Activated CD4-positive, alpha-beta memory T cell treated with anti-CD3 and anti-CD28 coated beads for 36 hours (primary cell): ENCODE measurements at regions of chr4 and their contacts with region 1.

Region 1: GRCh38 chr4:48033825-48034413 is 17.3 kb downstream of the NIPAL1 start:
- DNase-seq: peak; percentile 69
- H3K4me3 Mint-ChIP-seq: no peak overlapping the region
- H3K27ac Mint-ChIP-seq: no peak overlapping the region
- H3K4me1 Mint-ChIP-seq: peaks cover 37% of the 10 kb centered on the region
- H3K27me3 Mint-ChIP-seq: peaks cover 6% of the 10 kb centered on the region

Region 2: DNA sequence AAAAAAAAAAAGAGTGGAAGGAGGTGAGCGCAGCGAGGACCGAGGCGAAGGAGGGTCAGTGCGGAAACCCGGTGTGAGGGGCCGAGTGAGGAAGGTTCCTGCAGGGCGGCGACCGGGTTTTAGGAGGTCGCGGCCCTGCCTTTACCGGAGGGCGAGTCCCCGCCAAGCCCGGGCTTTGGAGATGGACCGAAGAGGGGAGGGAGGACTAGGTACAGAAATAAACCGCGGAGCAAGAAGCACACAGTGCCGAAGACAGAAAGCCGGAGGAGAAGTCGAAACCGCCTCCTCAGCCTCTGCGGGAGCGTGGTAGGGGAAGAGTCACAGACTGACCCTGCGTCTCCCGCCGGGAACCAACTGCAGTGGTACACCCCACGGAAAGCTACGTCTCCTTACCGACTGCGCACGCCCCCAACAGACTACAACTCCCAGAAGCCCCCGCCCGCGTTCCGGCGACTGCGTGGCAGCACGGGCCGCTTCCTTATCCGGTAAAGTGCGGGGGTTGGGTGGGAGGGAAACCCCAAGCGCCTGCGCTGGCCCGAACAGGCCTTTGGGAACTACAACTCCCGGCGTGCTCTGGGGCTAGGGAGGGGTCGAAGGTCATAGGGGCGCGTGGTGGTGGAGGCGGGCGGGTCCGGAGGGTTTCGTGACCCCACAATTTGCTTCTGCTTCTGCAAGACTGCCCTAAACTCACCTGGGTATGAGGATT is 119.5 kb before region 1 on chr4 and contains the start of gene NFXL1:
- CTCF ChIA-PET with region 1: no interaction called
- POLR2A ChIA-PET with region 1: no interaction called
- intact Hi-C with region 1: loop called (anchors 5 kb)
- DNase-seq: peak; percentile 98
- H3K4me3 Mint-ChIP-seq: peak within 1 kb of the TSS; percentile 97
- H3K27ac Mint-ChIP-seq: peak within 1 kb of the TSS; percentile 93
- H3K4me1 Mint-ChIP-seq: peaks cover 30% of the 10 kb centered on the region
- H3K27me3 Mint-ChIP-seq: no peaks in the 10 kb centered on the region
- total RNA-seq, gene NFXL1: 10.9 to 12.0 TPM

Region 3: DNA sequence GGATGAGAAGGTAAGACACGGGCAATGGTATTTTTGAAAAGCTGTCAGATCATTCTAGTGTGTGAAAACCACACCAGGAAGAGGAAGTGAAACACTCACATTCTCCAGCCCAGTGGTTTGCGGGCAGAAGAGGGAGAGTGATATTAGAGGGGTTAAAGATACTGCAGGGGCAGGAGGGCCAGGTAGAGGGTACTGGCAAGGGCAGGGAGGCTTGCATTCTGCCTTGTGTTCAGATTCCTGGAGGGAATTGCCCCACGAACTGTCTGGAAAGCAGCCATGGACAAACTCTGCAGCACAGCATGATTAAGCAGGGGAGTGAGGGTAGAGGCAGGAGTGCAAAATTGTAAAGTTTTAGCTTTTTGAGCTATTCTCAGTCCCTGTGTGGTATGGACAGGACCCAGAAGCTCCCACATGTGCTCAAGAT is 13.5 kb after region 1 on chr4:
- CTCF ChIA-PET with region 1: interaction called, 87 read pairs
- POLR2A ChIA-PET with region 1: interaction called, 10 read pairs
- intact Hi-C with region 1: loop called (anchors 1 kb)
- DNase-seq: peak; percentile 91
- H3K4me3 Mint-ChIP-seq: no peak overlapping the region
- H3K27ac Mint-ChIP-seq: peak overlapping the region; percentile 15
- H3K4me1 Mint-ChIP-seq: peaks cover 52% of the 10 kb centered on the region
- H3K27me3 Mint-ChIP-seq: peaks cover 34% of the 10 kb centered on the region

Region 4: GRCh38 chr4:48093949-48094550 is 60.1 kb after region 1 on chr4:
- CTCF ChIA-PET with region 1: interaction called, 15 read pairs
- POLR2A ChIA-PET with region 1: no interaction called
- intact Hi-C with region 1: loop called (anchors 2 kb)
- DNase-seq: peak; percentile 75
- H3K4me3 Mint-ChIP-seq: no peak overlapping the region
- H3K27ac Mint-ChIP-seq: peak overlapping the region; percentile 65
- H3K4me1 Mint-ChIP-seq: peaks cover 16% of the 10 kb centered on the region
- H3K27me3 Mint-ChIP-seq: no peaks in the 10 kb centered on the region

Region 5: DNA sequence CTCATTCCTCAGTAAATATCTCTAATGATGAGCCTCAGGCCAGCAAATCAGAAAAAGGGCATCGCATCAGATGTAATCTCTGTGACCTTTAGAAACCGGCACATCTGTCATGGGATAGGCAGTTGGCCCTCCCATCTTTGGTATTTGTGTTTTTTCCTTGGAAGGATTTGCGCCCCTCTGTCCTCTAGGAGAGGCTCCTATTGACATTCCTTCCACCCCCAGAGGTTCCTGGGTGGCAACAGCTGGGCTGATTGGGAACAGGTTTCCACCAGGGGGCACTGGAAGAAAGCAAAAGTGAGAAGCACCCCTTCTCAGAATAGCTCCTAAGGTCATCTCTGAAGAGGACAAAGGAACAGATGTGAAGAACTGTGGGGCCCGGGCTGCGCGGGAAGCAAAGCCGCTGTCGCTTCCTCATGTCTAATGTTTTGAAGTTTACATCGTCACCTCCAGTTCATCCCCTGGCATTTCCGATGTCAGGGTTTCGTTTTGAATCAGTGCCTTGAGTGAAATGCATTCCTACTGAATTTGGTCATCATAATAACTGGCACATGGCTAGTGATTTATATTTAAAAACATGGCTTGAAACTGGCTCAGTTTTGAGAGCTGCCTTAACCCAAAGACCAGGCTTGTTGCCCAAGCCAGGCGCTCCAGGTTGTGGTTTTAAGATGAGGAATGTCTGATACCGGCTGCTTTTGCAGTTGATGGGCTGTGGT is 93.9 kb after region 1 on chr4:
- CTCF ChIA-PET with region 1: interaction called, 15 read pairs
- POLR2A ChIA-PET with region 1: interaction called, 5 read pairs
- intact Hi-C with region 1: loop called (anchors 1 kb)
- DNase-seq: peak; percentile 93
- H3K4me3 Mint-ChIP-seq: peak overlapping the region; percentile 63
- H3K27ac Mint-ChIP-seq: peak overlapping the region; percentile 95
- H3K4me1 Mint-ChIP-seq: peaks cover 89% of the 10 kb centered on the region
- H3K27me3 Mint-ChIP-seq: no peaks in the 10 kb centered on the region

Region 6: DNA sequence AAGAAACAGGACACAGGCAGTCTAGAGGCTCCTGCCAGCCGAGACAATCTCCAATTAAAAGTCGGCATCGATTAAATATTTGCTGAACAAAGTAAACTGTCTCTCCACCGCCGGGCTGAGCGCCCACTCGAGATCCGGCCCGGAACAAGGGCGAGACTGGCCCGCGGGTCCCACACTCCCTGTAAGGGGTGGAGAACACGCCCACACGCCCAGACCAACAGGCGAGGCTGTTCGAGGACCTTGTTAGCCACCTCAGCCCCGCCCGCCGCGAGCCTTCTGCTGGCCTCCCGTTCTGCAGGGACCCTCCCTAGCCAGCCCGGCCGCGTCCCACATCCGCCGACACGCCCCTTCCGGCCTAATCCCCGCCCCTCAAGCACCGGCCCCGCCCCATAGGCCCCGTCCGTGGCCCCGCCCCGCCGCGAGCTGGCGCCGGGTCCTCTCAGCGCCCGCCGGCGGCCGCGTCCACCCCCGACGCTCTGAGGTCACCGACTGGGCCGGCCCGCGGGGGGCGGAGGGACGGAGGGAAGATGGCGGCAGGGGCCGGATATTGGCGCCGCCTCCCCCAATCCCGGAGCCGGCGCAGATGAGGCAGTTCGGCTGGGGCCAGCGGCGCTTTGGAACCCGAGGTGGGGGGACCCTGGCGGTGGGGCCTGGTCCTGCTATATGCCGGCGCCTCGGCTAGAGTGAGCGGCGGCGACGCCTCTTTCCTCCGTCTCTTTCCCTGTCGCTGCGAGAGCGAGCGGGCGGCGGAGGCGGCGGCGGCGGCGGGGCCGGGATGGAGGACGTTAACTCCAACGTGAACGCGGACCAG is 307.3 kb after region 1 on chr4 and contains the start of gene SLAIN2:
- CTCF ChIA-PET with region 1: no interaction called
- POLR2A ChIA-PET with region 1: no interaction called
- intact Hi-C with region 1: loop called (anchors 1 kb)
- DNase-seq: peak; percentile 99
- H3K4me3 Mint-ChIP-seq: peak within 1 kb of the TSS; percentile 99
- H3K27ac Mint-ChIP-seq: peak within 1 kb of the TSS; percentile 98
- H3K4me1 Mint-ChIP-seq: peaks cover 64% of the 10 kb centered on the region
- H3K27me3 Mint-ChIP-seq: no peaks in the 10 kb centered on the region
- total RNA-seq, gene SLAIN2: 54.9 to 63.8 TPM